ENCODE measurements at regions of chr14 and their contacts with region 1.

Region 1: GRCh38 chr14:106622200-106622745 is 1095.9 kb downstream of the TMEM121 start:
- DNase-seq: peak; percentile 63
- ATAC-seq: peak; percentile 66
- H3K4me3 Mint-ChIP-seq: no peak overlapping the region
- H3K27ac Mint-ChIP-seq: no peak overlapping the region
- H3K4me1 Mint-ChIP-seq: peaks cover 12% of the 10 kb centered on the region
- H3K27me3 Mint-ChIP-seq: peaks cover 22% of the 10 kb centered on the region
- CTCF ChIP-seq: no peak

Region 2: DNA sequence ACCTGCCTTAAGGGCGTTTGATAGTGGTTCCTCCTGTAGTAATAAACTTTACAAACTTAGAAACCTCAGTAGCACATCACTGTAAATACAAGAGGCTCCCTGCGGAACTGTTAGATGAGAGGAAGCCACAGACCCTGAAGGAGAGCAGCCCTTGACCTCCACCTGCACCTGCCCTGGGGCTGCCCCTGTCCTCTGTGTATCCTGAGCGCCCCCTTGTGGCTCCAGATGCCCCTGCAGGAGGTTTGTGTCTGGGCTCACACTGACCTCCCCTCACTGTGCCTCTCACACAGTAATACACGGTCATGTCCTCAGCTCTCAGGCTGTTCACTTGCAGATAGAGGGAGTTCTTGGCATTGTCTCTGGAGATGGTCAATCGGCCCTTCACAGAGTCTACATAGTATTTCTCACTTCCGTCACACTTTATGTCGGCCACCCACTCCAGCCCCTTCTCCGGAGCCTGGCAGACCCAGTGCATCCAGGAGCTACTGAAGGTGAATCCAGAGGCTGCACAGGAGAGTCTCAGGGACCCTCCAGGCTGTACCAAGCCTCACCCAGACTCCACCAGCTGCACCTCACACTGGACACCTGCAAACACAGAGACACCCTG is 36.1 kb before region 1 on chr14:
- CTCF ChIA-PET with region 1: interaction called, 25 read pairs
- POLR2A ChIA-PET with region 1: no interaction called
- intact Hi-C with region 1: no loop called
- DNase-seq: peak; percentile 85
- ATAC-seq: peak; percentile 100
- H3K4me3 Mint-ChIP-seq: no peak overlapping the region
- H3K27ac Mint-ChIP-seq: no peak overlapping the region
- H3K4me1 Mint-ChIP-seq: peaks cover 4% of the 10 kb centered on the region
- H3K27me3 Mint-ChIP-seq: no peaks in the 10 kb centered on the region
- CTCF ChIP-seq: peak; percentile 91

Region 3: GRCh38 chr14:106605548-106606448 is 16.5 kb before region 1 on chr14:
- CTCF ChIA-PET with region 1: interaction called, 133 read pairs
- POLR2A ChIA-PET with region 1: no interaction called
- intact Hi-C with region 1: no loop called
- DNase-seq: peak; percentile 94
- ATAC-seq: peak; percentile 100
- H3K4me3 Mint-ChIP-seq: no peak overlapping the region
- H3K27ac Mint-ChIP-seq: no peak overlapping the region
- H3K4me1 Mint-ChIP-seq: no peaks in the 10 kb centered on the region
- H3K27me3 Mint-ChIP-seq: peaks cover 20% of the 10 kb centered on the region
- CTCF ChIP-seq: peak; percentile 75

Region 4: DNA sequence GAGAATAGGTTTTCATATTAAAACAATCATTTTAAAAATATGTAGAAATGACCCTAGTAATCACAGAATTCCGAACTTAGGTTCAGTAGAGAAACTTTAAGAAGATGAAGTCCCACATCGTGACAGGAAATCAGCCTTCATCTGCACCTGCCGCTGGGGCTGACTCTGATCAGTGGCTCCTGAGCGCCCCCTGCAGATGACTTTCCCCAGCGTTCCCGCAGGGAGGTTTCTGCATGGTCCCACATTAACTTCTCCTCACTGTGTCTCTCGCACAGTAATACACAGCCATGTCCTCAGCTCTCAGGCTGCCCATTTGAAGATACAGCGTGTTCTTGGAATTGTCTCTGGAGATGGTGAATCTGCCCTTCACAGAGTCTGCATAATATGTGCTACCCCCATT is 35.2 kb after region 1 on chr14:
- CTCF ChIA-PET with region 1: interaction called, 15 read pairs
- POLR2A ChIA-PET with region 1: no interaction called
- intact Hi-C with region 1: no loop called
- DNase-seq: peak; percentile 87
- ATAC-seq: peak; percentile 63
- H3K4me3 Mint-ChIP-seq: no peak overlapping the region
- H3K27ac Mint-ChIP-seq: no peak overlapping the region
- H3K4me1 Mint-ChIP-seq: peaks cover 16% of the 10 kb centered on the region
- H3K27me3 Mint-ChIP-seq: peaks cover 1% of the 10 kb centered on the region
- CTCF ChIP-seq: peak; percentile 84